PC-9 (cell line): ENCODE measurements at regions of chr2 and their contacts with region 1.

Region 1: DNA sequence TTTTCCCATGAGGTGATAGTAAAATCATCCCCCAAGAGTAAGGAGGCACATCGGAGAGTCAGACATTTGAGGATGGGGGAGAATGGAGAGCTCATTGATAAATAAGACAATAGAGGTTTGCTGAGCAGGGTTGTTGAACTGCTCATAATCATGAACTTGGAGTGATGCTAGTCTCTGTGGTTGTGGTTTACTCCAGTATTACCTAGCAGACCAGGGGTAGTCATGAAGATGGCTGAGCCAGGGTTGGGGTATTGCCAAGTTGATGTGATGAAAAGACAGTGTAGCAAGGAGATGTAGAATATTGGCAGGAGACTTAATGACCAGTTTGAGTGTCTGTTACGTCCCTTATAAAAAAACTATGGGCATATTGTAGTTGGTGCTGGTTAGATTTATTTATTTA is 25.4 kb downstream of the CYBRD1 start:
- DNase-seq: no peak
- H3K4me3 ChIP-seq: no peak overlapping the region
- H3K27ac ChIP-seq: no peak overlapping the region
- H3K4me1 ChIP-seq: no peaks in the 10 kb centered on the region
- H3K27me3 ChIP-seq: no peaks in the 10 kb centered on the region
- CTCF ChIP-seq: no peak

Region 2: DNA sequence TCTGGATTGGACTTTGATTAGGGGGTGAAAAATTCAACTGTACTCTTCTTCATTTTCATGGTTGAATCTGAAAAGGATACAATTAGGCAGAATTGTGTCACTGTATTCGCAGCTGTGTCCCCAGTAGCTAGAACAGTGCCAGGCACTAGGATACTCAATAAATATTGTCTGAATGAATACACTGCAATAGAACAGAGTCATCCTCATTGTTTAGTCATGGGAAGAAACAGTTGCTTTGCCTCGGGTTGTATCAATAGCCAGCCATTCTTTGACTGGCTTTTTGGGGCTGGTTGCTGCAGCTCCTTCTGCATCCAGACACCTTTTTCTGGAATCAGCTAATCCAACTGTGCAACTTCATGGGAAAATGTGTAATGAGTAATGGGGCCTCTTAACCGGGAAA is 121.4 kb after region 1 on chr2:
- CTCF ChIA-PET with region 1: interaction called, 15 read pairs
- POLR2A ChIA-PET with region 1: no interaction called
- intact Hi-C with region 1: no loop called
- DNase-seq: no peak
- H3K4me3 ChIP-seq: no peak overlapping the region
- H3K27ac ChIP-seq: no peak overlapping the region
- H3K4me1 ChIP-seq: no peaks in the 10 kb centered on the region
- H3K27me3 ChIP-seq: peaks cover 35% of the 10 kb centered on the region
- CTCF ChIP-seq: no peak